ENCODE measurements at regions of chr3 and their contacts with region 1.

Region 1: GRCh38 chr3:98573181-98573728 is 20.2 kb downstream of the CPOX start:
- DNase-seq: no peak
- ATAC-seq: no peak
- H3K4me3 Mint-ChIP-seq: peak overlapping the region; percentile 11
- H3K27ac Mint-ChIP-seq: peak overlapping the region; percentile 70
- H3K4me1 Mint-ChIP-seq: peaks cover 49% of the 10 kb centered on the region
- H3K27me3 Mint-ChIP-seq: peaks cover 4% of the 10 kb centered on the region

Region 2: DNA sequence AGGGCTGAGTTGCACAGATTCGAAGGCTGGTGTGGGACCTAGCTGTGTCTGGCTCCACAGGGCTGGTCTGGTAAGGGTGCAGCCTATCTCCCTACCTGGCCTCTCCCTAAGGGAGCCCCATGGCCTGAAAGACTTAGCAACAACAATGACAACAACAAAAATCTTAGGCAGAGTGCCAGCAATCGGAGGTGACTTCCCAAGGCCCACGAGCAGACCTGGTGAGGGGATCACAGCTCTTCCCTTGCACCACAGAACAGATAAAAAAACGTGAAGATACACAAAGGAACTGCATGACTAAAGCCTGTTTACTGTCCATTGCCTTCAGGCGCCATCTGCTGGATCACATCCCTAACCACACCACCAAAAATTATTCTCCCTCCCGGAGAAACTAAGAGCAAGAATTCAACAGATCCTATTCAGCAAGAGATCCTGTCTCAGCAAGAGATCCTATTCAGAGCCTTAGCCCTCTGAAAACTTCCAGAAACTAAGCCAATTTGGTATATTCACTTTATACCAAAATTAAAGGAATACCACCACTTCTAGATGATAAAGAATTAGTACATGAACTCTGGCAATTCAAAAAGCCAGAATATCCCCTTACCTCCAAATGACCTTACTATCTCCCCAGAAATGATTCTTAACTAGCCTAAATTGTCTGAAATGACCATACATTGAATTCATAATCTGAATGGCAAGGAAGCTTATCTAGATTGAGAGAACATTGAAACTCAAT is 243.7 kb before region 1 on chr3:
- CTCF ChIA-PET with region 1: no interaction called
- POLR2A ChIA-PET with region 1: no interaction called
- intact Hi-C with region 1: loop called (anchors 2 kb)
- DNase-seq: peak; percentile 60
- ATAC-seq: peak; percentile 67
- H3K4me3 Mint-ChIP-seq: no peak overlapping the region
- H3K27ac Mint-ChIP-seq: no peak overlapping the region
- H3K4me1 Mint-ChIP-seq: no peaks in the 10 kb centered on the region
- H3K27me3 Mint-ChIP-seq: peaks cover 19% of the 10 kb centered on the region

Region 3: GRCh38 chr3:98359993-98360675 is 213.1 kb before region 1 on chr3:
- CTCF ChIA-PET with region 1: no interaction called
- POLR2A ChIA-PET with region 1: no interaction called
- intact Hi-C with region 1: loop called in 1 of 2 experiments (anchors 5 kb)
- DNase-seq: peak; percentile 27
- ATAC-seq: peak; percentile 64
- H3K4me3 Mint-ChIP-seq: no peak overlapping the region
- H3K27ac Mint-ChIP-seq: no peak overlapping the region
- H3K4me1 Mint-ChIP-seq: no peaks in the 10 kb centered on the region
- H3K27me3 Mint-ChIP-seq: peaks cover 4% of the 10 kb centered on the region

Region 4: DNA sequence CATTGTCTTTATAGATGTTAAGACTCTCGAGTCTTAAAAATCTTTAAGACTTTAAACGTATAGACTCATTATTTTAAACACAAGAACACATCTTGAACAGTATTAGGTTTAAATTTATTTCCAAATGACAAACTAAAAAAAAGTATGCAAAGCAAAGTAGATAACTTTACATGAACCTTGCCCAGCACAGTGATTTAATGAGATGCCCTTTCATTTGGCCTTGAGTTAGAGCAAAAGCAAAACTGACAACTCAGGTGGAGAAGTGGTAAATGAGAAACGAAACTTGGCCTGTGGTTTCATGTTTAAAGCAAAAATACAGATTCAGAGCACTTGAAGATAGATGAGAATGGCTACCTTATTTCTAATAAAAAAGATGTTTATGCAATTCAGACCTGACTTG is 32.9 kb before region 1 on chr3:
- CTCF ChIA-PET with region 1: interaction called, 12 read pairs
- POLR2A ChIA-PET with region 1: no interaction called
- intact Hi-C with region 1: no loop called
- DNase-seq: no peak
- ATAC-seq: peak; percentile 47
- H3K4me3 Mint-ChIP-seq: no peak overlapping the region
- H3K27ac Mint-ChIP-seq: peak overlapping the region; percentile 5
- H3K4me1 Mint-ChIP-seq: peaks cover 53% of the 10 kb centered on the region
- H3K27me3 Mint-ChIP-seq: no peaks in the 10 kb centered on the region

Region 5: DNA sequence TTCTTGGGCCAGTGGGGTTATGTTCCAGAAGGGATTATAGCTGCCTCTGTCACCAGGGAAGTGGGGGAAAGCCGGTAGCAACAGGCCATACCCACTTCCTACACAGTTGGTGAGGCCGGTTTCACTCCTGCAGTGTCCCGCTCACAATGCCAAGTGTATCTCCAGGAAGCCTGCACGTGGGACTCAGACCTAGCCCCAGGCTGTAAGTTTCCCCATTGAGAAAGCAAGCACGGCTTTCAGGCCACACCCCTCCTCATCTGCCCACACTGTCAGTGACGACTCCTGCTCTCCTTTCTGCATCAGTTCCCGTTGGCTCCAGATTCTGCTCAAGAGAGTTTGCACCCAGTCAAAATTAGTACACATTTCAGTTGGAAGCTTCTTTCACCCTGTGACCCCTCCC is 71.8 kb after region 1 on chr3:
- CTCF ChIA-PET with region 1: no interaction called
- POLR2A ChIA-PET with region 1: no interaction called
- intact Hi-C with region 1: no loop called
- DNase-seq: peak; percentile 9
- ATAC-seq: no peak
- H3K4me3 Mint-ChIP-seq: no peak overlapping the region
- H3K27ac Mint-ChIP-seq: no peak overlapping the region
- H3K4me1 Mint-ChIP-seq: no peaks in the 10 kb centered on the region
- H3K27me3 Mint-ChIP-seq: peaks cover 2% of the 10 kb centered on the region